Tibial artery (tissue), 4 donors: ENCODE measurements at regions of chr12 and their contacts with region 1.

Region 1: GRCh38 chr12:121053706-121054105 is 14.7 kb upstream of the OASL start:
- DNase-seq: peak in 1 of 2 donors; percentile 23
- H3K4me3 ChIP-seq: no peak overlapping the region
- H3K27ac ChIP-seq: no peak overlapping the region
- H3K4me1 ChIP-seq: no peaks in the 10 kb centered on the region
- H3K27me3 ChIP-seq: peaks cover 0 to 7% of the 10 kb centered on the region in 2 donors
- CTCF ChIP-seq: no peak

Region 2: DNA sequence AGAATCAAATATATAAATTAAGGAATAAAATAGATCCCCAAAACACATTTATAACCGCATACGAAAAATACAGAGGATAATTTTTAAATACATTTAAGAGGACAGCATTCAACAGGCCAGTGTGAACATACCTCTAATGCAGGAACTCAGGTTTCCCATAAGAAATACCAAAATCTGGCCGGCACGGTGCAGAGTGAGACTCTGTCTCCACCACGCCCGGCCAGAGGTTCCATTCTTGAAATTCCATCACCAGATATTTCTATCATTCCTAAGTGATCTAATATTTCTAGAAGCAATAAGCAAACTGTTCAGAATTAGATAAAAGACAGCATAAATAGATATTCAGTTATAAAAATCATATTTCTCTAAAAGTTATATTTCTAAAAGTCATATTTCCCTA is 15.5 kb after region 1 on chr12:
- intact Hi-C with region 1: loop called (anchors 1 kb)
- DNase-seq: no peak
- H3K4me3 ChIP-seq: no peak overlapping the region
- H3K27ac ChIP-seq: no peak overlapping the region
- H3K4me1 ChIP-seq: no peaks in the 10 kb centered on the region
- H3K27me3 ChIP-seq: peaks cover 0 to 9% of the 10 kb centered on the region in 2 donors
- CTCF ChIP-seq: no peak